Activated naive CD4-positive, alpha-beta T cell treated with anti-CD3 and anti-CD28 coated beads, Interleukin-2, amount 10 ng/mL, durations not matched to agents 7 days and 5 days (primary cell): ENCODE measurements at regions of chr1 and their contacts with region 1.

Region 1: GRCh38 chr1:160006312-160006940 is 25.4 kb downstream of the PIGM start:
- DNase-seq: peak; percentile 86
- H3K4me3 Mint-ChIP-seq: no peak overlapping the region
- H3K27ac Mint-ChIP-seq: no peak overlapping the region
- H3K4me1 Mint-ChIP-seq: no peaks in the 10 kb centered on the region
- H3K27me3 Mint-ChIP-seq: peaks cover 29% of the 10 kb centered on the region

Region 2: GRCh38 chr1:159798893-159799292 is 207.5 kb before region 1 on chr1:
- CTCF ChIA-PET with region 1: interaction called, 72 read pairs
- DNase-seq: peak; percentile 64
- H3K4me3 Mint-ChIP-seq: no peak overlapping the region
- H3K27ac Mint-ChIP-seq: no peak overlapping the region
- H3K4me1 Mint-ChIP-seq: peaks cover 17% of the 10 kb centered on the region
- H3K27me3 Mint-ChIP-seq: peaks cover 53% of the 10 kb centered on the region

Region 3: GRCh38 chr1:159924981-159925712 is 81.3 kb before region 1 on chr1 and contains the start of gene TAGLN2:
- CTCF ChIA-PET with region 1: interaction called, 301 read pairs
- DNase-seq: peak; percentile 92
- H3K4me3 Mint-ChIP-seq: peak within 1 kb of the TSS; percentile 91
- H3K27ac Mint-ChIP-seq: peak within 1 kb of the TSS; percentile 94
- H3K4me1 Mint-ChIP-seq: peaks cover 49% of the 10 kb centered on the region
- H3K27me3 Mint-ChIP-seq: peaks cover 16% of the 10 kb centered on the region

Region 4: GRCh38 chr1:159945483-159946241 is 60.8 kb before region 1 on chr1 and contains the start of gene IGSF9:
- CTCF ChIA-PET with region 1: interaction called, 301 read pairs
- DNase-seq: peak; percentile 76
- H3K4me3 Mint-ChIP-seq: peak within 1 kb of the TSS; percentile 16
- H3K27ac Mint-ChIP-seq: peak within 1 kb of the TSS; percentile 42
- H3K4me1 Mint-ChIP-seq: peaks cover 11% of the 10 kb centered on the region
- H3K27me3 Mint-ChIP-seq: peaks cover 87% of the 10 kb centered on the region

Region 5: GRCh38 chr1:159953536-159954515 is 52.6 kb before region 1 on chr1 and contains the start of gene SLAMF9:
- CTCF ChIA-PET with region 1: interaction called, 31 read pairs
- DNase-seq: no peak
- H3K4me3 Mint-ChIP-seq: no peak within 1 kb of the TSS
- H3K27ac Mint-ChIP-seq: no peak within 1 kb of the TSS
- H3K4me1 Mint-ChIP-seq: no peaks in the 10 kb centered on the region
- H3K27me3 Mint-ChIP-seq: peaks cover 51% of the 10 kb centered on the region

Region 6: GRCh38 chr1:159972443-159973205 is 33.8 kb before region 1 on chr1:
- CTCF ChIA-PET with region 1: no interaction called
- DNase-seq: no peak
- H3K4me3 Mint-ChIP-seq: no peak overlapping the region
- H3K27ac Mint-ChIP-seq: no peak overlapping the region
- H3K4me1 Mint-ChIP-seq: no peaks in the 10 kb centered on the region
- H3K27me3 Mint-ChIP-seq: peaks cover 48% of the 10 kb centered on the region

Region 7: DNA sequence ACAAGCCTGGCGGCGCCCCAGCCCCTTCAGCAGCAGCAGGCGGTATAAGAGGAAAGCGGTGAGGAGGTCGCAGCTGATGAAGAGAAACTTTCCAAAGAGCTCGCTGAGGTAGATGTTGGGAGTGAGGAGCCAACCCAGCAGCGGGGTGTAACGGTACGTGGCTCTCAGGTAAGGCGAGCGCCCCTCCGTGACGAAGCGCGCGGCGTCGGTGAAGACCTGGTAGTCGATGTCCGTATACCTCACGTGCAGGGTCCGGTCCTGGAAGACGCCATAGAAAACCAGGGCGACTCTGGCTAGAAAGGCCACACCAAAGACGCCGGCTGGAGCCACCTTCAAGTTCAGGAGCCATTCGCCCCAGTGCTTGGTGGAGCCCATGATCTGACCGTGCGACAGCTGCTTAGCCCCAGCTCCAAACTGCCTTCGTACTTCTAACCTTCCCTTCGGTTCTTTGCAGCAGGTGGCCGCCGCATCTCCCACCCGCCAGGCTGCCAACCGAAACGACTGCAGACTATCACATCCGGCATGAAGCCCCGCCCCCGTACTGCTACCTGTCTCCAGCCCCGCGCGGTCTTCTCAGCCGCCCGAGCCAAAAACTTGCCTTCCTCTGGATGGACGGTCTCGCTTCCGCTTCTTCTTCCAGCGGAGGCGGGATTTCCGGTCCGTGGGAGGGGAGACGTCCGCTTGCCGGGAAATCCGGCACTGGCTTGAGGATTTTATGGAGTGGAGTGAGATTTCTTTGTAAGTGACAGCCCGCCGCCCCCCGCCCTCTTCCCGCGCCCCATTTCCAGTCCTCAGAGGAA is 25.1 kb after region 1 on chr1 and contains the start of gene PIGM:
- CTCF ChIA-PET with region 1: interaction called, 11 read pairs
- DNase-seq: peak; percentile 98
- H3K4me3 Mint-ChIP-seq: peak within 1 kb of the TSS; percentile 89
- H3K27ac Mint-ChIP-seq: peak within 1 kb of the TSS; percentile 86
- H3K4me1 Mint-ChIP-seq: peaks cover 36% of the 10 kb centered on the region
- H3K27me3 Mint-ChIP-seq: peaks cover 15% of the 10 kb centered on the region

Region 8: DNA sequence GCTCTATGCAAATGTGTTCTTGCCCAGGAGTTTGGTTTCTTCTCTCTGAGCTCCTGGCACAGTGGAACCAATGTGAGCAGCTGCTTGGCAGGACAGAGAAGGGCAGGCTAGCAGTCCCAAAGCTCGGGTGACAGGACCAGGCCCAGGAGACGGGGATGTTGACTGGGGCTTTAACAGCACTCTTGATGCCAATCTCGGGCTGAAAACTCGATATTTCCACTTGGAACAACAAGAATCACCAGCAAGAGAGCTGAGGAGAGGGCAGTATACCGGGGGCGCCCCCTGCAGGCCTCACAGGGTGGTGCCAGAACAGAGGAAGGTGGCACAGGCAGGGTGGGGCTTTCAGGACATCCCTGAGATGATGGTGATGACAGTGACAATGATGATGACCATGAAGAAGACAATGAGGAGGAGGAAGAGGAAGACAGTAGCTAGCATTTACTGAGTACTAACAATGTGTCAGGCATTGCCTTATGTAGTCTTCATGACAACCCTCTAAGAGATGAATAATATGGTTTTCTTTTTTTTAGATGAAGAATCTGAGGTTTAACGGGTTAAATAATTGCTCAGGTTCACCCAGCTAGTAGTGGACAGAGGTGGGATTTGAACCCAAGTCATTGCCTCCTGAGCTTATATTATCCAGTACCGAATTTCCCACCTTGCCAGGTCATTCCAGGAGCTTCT is 72.2 kb after region 1 on chr1:
- CTCF ChIA-PET with region 1: interaction called, 16 read pairs
- DNase-seq: peak; percentile 78
- H3K4me3 Mint-ChIP-seq: no peak overlapping the region
- H3K27ac Mint-ChIP-seq: no peak overlapping the region
- H3K4me1 Mint-ChIP-seq: no peaks in the 10 kb centered on the region
- H3K27me3 Mint-ChIP-seq: peaks cover 72% of the 10 kb centered on the region